MCF 10A (cell line): ENCODE measurements at regions of chr2 and their contacts with region 1.

Region 1: DNA sequence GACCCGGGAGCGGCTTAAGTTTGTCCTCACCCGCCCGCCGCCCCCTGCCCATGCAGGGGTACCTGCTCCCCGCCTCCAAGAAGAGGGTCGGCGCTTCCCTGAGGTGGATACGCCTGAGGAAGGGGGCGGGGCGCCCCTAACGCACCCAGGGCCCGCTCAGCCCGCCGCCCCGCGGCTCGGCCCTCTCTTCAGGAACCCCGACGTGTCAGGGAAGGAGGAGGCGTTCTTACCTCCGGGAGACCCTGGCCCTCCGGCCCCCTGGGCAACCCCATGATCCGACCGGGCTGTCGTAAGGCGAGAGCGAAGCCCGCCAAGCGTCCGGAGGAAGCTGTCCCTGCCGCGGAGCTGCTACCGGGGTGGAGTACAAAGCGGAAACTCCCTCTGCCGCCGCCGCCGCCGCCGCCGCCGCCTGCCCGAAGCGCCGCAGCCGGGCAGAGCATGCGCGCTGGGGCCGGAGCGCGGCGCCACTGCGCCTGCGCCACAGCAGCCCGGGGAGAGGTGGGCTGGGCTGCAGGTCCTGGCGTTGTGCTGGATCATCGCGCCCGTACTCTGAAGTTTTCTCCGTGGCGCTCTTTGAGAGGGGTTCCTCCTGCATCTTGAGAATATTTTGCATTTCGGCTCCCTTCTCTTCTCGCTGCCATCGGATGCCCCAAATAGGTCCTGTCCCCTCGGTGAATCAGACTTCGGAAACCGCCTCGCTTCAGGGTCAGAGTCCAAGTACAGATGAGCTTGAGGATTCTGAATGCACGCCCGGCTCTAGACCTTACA is at the start of gene CCDC93:
- DNase-seq: peak; percentile 80
- H3K4me3 Mint-ChIP-seq: peak within 1 kb of the TSS; percentile 83
- H3K27ac Mint-ChIP-seq: peak within 1 kb of the TSS; percentile 64
- H3K4me1 Mint-ChIP-seq: peaks cover 33% of the 10 kb centered on the region
- H3K27me3 Mint-ChIP-seq: no peaks in the 10 kb centered on the region
- CTCF ChIP-seq: no peak
- total RNA-seq, gene CCDC93: 37.8 and 44.9 TPM in 2 replicates

Region 2: GRCh38 chr2:117980783-117981676 is 32.9 kb before region 1 on chr2:
- CTCF ChIA-PET with region 1: no interaction called
- POLR2A ChIA-PET with region 1: interaction called, 15 read pairs
- intact Hi-C with region 1: no loop called
- DNase-seq: peak; percentile 88
- H3K4me3 Mint-ChIP-seq: peak overlapping the region; percentile 35
- H3K27ac Mint-ChIP-seq: peak overlapping the region; percentile 79
- H3K4me1 Mint-ChIP-seq: peaks cover 23% of the 10 kb centered on the region
- H3K27me3 Mint-ChIP-seq: no peaks in the 10 kb centered on the region
- CTCF ChIP-seq: no peak